CD4-positive, alpha-beta T cell (primary cell): ENCODE measurements at regions of chr1 and their contacts with region 1.

Region 1: DNA sequence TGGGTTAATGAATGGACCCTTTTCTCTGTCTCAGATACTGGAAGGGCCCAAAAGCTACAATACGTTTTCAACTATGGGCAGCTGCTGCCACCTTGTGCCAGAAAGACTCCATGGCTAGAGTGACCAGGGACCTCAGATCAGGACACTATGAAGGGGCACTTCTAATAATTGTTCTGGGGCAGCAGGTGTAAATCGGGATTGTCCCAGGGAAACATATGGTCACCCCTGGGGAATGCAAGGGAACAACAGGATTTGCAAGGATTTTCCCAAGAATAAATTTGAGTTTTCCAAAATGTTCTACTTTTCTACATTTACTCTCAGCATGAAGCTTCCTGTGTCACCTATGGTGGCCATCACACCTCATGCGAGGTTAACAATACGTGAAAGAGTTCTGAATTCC is 12.0 kb upstream of the FCAMR start:
- DNase-seq: peak; percentile 48 to 77 (median 59)
- ATAC-seq: peak; percentile 81
- H3K4me3 ChIP-seq: no peak overlapping the region
- H3K4me3 Mint-ChIP-seq: no peak overlapping the region
- H3K27ac ChIP-seq: no peak overlapping the region
- H3K27ac Mint-ChIP-seq: no peak overlapping the region
- H3K4me1 ChIP-seq: no peaks in the 10 kb centered on the region
- H3K4me1 Mint-ChIP-seq: no peaks in the 10 kb centered on the region
- H3K27me3 ChIP-seq: peaks cover 6 to 12% of the 10 kb centered on the region in 2 experiments
- H3K27me3 Mint-ChIP-seq: peaks cover 18% of the 10 kb centered on the region
- CTCF ChIP-seq: peak; percentile 88

Region 2: GRCh38 chr1:206469933-206470691 is 512.1 kb before region 1 on chr1 and contains the start of gene IKBKE:
- CTCF ChIA-PET with region 1: no interaction called
- POLR2A ChIA-PET with region 1: no interaction called
- intact Hi-C with region 1: loop called in 1 of 2 experiments (anchors 10 kb)
- DNase-seq: peak; percentile 24 to 77 (median 40)
- ATAC-seq: peak; percentile 67
- H3K4me3 ChIP-seq: peak within 1 kb of the TSS; percentile 99
- H3K4me3 Mint-ChIP-seq: peak within 1 kb of the TSS; percentile 88
- H3K27ac ChIP-seq: peak within 1 kb of the TSS; percentile 55 to 61
- H3K27ac Mint-ChIP-seq: peak within 1 kb of the TSS; percentile 79
- H3K4me1 ChIP-seq: peaks cover 86% of the 10 kb centered on the region
- H3K4me1 Mint-ChIP-seq: peaks cover 76% of the 10 kb centered on the region
- H3K27me3 ChIP-seq: no peaks in the 10 kb centered on the region
- H3K27me3 Mint-ChIP-seq: no peaks in the 10 kb centered on the region
- CTCF ChIP-seq: no peak
- total RNA-seq, gene IKBKE: 27.9 to 29.8 TPM

Region 3: GRCh38 chr1:206658264-206658980 is 323.8 kb before region 1 on chr1:
- CTCF ChIA-PET with region 1: interaction called, 10 read pairs
- POLR2A ChIA-PET with region 1: no interaction called
- intact Hi-C with region 1: no loop called
- DNase-seq: peak in 12 of 14 experiments; percentile 19 to 74 (median 42)
- ATAC-seq: peak; percentile 66
- H3K4me3 ChIP-seq: no peak overlapping the region
- H3K4me3 Mint-ChIP-seq: no peak overlapping the region
- H3K27ac ChIP-seq: no peak overlapping the region
- H3K27ac Mint-ChIP-seq: no peak overlapping the region
- H3K4me1 ChIP-seq: peaks cover 6% of the 10 kb centered on the region
- H3K4me1 Mint-ChIP-seq: no peaks in the 10 kb centered on the region
- H3K27me3 ChIP-seq: peaks cover 16 to 23% of the 10 kb centered on the region in 2 experiments
- H3K27me3 Mint-ChIP-seq: peaks cover 43% of the 10 kb centered on the region
- CTCF ChIP-seq: peak; percentile 53

Region 4: GRCh38 chr1:206808615-206809014 is 173.6 kb before region 1 on chr1:
- CTCF ChIA-PET with region 1: interaction called, 16 read pairs
- POLR2A ChIA-PET with region 1: interaction called, 3 read pairs
- intact Hi-C with region 1: loop called (anchors 1 to 2 kb)
- DNase-seq: peak in 13 of 14 experiments; percentile 15 to 82 (median 41)
- ATAC-seq: peak; percentile 85
- H3K4me3 ChIP-seq: no peak overlapping the region
- H3K4me3 Mint-ChIP-seq: no peak overlapping the region
- H3K27ac ChIP-seq: no peak overlapping the region
- H3K27ac Mint-ChIP-seq: peak overlapping the region; percentile 28
- H3K4me1 ChIP-seq: peaks cover 34% of the 10 kb centered on the region
- H3K4me1 Mint-ChIP-seq: peaks cover 50% of the 10 kb centered on the region
- H3K27me3 ChIP-seq: no peaks in the 10 kb centered on the region
- H3K27me3 Mint-ChIP-seq: no peaks in the 10 kb centered on the region
- CTCF ChIP-seq: peak; percentile 40

Region 5: GRCh38 chr1:206935491-206936067 is 46.6 kb before region 1 on chr1:
- CTCF ChIA-PET with region 1: interaction called, 5 read pairs
- POLR2A ChIA-PET with region 1: interaction called, 5 read pairs
- intact Hi-C with region 1: loop called in 1 of 2 experiments (anchors 1 kb)
- DNase-seq: peak in 8 of 14 experiments; percentile 20 to 71 (median 49)
- ATAC-seq: peak; percentile 55
- H3K4me3 ChIP-seq: no peak overlapping the region
- H3K4me3 Mint-ChIP-seq: no peak overlapping the region
- H3K27ac ChIP-seq: no peak overlapping the region
- H3K27ac Mint-ChIP-seq: no peak overlapping the region
- H3K4me1 ChIP-seq: peaks cover 24% of the 10 kb centered on the region
- H3K4me1 Mint-ChIP-seq: peaks cover 29% of the 10 kb centered on the region
- H3K27me3 ChIP-seq: no peaks in the 10 kb centered on the region
- H3K27me3 Mint-ChIP-seq: no peaks in the 10 kb centered on the region
- CTCF ChIP-seq: peak; percentile 60